Common myeloid progenitor, CD34-positive (primary cell): ENCODE measurements at regions of chr6 and their contacts with region 1.

Region 1: GRCh38 chr6:85678602-85679444 is 36.1 kb upstream of the SYNCRIP start:
- DNase-seq: peak; percentile 99 to 100 (median 100)
- H3K4me3 ChIP-seq: peak overlapping the region; percentile 78 to 100 (median 99)
- H3K27ac ChIP-seq: peak overlapping the region; percentile 82 to 93
- H3K4me1 ChIP-seq: peaks cover 22 to 44% (median 34%) of the 10 kb centered on the region in 4 experiments
- H3K27me3 ChIP-seq: no peaks in the 10 kb centered on the region

Region 2: DNA sequence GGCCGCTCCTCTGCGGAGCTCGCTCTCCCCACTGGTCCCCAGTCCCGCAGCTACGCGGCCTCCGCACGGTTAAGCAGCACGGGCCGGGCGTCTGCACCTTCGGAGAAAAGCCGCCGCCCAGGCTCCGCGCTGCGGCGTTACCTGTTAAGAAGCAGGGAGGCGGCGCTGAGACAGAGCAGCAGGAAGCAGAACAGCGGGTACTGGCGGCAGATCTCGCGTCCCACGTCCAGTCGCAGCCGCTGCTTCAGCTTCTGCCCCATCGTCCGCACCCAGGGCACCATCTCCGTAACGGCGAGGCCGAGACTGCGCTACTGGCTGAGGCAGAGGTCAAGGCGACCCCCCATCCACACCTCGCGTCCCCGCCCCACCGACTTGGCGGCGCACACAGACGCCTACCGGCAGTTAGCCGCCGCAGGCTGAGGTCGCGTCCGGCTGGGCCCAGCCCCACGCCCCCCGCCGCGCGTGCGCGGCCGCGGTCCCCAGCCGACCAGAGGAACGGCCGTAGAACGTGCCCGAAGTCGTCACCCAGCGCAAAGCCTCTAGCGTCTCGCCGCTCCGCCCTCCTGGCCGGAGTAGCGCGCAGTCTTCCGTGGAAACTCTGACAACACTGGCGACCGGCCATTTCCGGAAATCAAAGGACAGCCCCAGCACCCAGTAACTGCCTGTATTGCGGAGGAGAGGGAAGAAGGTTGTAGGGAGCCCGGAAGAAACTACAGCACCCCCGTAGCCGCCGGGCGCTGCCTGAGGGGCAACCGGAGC is 85.2 kb before region 1 on chr6 and contains the start of gene SNX14:
- CTCF ChIA-PET with region 1: interaction called, 5 read pairs
- POLR2A ChIA-PET with region 1: interaction called, 15 read pairs
- DNase-seq: peak; percentile 83 to 94 (median 89)
- H3K4me3 ChIP-seq: peak within 1 kb of the TSS; percentile 82 to 97 (median 89)
- H3K27ac ChIP-seq: peak within 1 kb of the TSS; percentile 64 to 85
- H3K4me1 ChIP-seq: peaks cover 5 to 24% (median 13%) of the 10 kb centered on the region in 4 experiments
- H3K27me3 ChIP-seq: no peaks in the 10 kb centered on the region

Region 3: DNA sequence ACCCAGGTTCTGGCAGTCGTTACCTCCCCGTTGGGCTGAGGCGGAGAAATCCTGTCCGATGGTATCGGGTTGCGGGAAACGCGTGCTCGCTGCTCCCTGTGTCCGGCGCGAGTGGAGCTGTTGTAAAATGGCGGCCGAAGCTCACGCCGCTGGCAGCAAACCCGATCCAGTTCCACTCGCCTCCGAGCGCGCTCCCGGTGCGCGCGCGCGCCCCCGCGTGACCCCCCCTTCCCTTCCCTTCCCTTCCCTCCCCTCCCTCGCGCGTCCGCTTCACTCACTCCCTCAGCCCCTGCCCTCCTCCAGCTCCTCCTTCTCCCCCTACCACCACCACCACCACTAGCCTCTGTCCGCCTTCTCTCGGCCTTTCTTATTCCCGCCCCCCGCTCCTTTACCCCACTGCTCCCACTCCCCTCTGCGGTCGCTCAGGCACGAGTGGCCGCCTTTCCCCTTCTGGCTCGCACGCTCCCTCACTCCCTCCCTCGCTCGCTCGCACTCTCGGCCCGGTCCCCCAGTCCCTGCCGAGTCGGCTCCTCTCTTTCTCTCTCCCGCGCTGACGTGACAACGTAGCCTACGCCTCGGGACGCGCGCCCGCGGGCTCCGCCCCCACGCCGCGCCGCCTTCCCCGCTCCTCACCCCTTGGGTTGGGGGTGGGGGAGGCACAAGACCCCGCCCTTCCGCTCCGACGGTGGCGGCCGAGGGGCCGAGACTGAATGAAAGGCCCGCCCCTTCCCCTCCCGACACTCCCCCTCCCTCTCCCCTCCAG is 35.9 kb before region 1 on chr6 and contains the start of gene SYNCRIP:
- CTCF ChIA-PET with region 1: interaction called, 80 read pairs
- POLR2A ChIA-PET with region 1: interaction called, 107 read pairs
- DNase-seq: peak; percentile 97 to 99 (median 99)
- H3K4me3 ChIP-seq: peak within 1 kb of the TSS; percentile 94 to 99 (median 95)
- H3K27ac ChIP-seq: peak within 1 kb of the TSS; percentile 97 to 98
- H3K4me1 ChIP-seq: peaks cover 18 to 46% (median 29%) of the 10 kb centered on the region in 4 experiments
- H3K27me3 ChIP-seq: no peaks in the 10 kb centered on the region

Region 4: DNA sequence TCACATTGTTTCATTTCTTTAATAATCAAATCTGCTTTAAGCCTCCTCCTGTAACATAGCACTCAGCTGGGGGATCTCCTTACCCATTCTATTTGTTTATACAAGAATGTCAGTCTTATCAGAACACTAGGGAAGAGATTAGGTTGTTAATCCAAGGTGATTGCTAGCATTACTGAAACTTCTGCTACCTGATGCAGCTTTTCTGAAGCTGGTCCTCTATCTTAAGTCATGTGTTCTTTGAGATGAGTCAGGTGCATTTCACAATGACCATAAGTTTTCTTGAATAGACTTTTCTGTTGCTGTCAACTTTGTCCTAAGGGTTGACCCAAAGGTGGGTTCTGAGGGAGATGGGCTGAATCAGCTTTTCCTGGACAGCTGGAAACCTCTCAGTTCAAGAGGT is 24.6 kb after region 1 on chr6:
- CTCF ChIA-PET with region 1: no interaction called
- POLR2A ChIA-PET with region 1: no interaction called
- DNase-seq: no peak
- H3K4me3 ChIP-seq: no peak overlapping the region
- H3K27ac ChIP-seq: no peak overlapping the region
- H3K4me1 ChIP-seq: no peaks in the 10 kb centered on the region
- H3K27me3 ChIP-seq: no peaks in the 10 kb centered on the region

Region 5: GRCh38 chr6:85747665-85748064 is 68.8 kb after region 1 on chr6:
- CTCF ChIA-PET with region 1: no interaction called
- POLR2A ChIA-PET with region 1: no interaction called
- DNase-seq: no peak
- H3K4me3 ChIP-seq: no peak overlapping the region
- H3K27ac ChIP-seq: no peak overlapping the region
- H3K4me1 ChIP-seq: no peaks in the 10 kb centered on the region
- H3K27me3 ChIP-seq: peaks cover 0 to 2% (median 0%) of the 10 kb centered on the region in 5 experiments